ENCODE measurements at regions of chr1 and their contacts with region 1.

Region 1: DNA sequence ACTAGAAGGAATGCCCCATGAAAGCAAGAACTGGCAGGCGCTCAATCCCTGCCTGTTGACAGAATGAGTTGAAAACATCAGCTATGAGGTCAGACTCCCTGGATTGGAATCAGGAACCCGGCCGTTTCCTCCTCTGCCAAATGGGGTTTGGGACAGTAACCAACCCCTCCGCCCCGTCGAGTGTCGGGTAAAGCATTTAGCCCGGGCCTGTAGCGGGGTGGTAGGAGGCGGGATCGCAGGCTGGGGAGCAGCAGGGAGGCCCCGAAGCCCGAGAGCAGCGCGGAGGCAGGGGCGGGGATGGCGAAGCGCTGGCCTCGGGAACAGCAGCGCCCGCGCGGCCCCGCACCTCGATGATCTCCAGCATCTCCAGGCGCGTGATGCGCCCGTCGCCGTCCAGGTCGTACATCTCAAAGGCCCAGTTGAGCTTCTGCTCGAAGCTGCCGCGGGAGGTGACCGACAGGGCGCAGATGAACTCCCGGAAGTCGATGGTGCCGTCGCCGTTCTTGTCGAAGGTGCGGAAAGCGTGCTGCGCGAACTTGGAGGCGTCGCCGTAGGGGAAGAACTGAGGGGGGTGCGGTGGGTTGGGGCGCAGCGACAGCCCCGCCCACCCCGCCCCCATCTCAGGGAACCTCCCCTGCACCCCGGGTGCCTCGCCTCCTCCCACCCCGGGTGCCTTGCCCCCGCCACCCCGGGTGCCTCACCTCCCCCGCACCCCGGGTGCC is 7.5 kb downstream of the HPCAL4 start:
- DNase-seq: peak in 3 of 5 donors; percentile 38 to 61 (median 51)
- H3K4me3 ChIP-seq: no peak overlapping the region
- H3K27ac ChIP-seq: no peak overlapping the region
- H3K4me1 ChIP-seq: peaks cover 3% of the 10 kb centered on the region
- H3K27me3 ChIP-seq: no peaks in the 10 kb centered on the region
- CTCF ChIP-seq: no peak
- EP300 ChIP-seq: no peak
- POLR2A ChIP-seq: no peak

Region 2: DNA sequence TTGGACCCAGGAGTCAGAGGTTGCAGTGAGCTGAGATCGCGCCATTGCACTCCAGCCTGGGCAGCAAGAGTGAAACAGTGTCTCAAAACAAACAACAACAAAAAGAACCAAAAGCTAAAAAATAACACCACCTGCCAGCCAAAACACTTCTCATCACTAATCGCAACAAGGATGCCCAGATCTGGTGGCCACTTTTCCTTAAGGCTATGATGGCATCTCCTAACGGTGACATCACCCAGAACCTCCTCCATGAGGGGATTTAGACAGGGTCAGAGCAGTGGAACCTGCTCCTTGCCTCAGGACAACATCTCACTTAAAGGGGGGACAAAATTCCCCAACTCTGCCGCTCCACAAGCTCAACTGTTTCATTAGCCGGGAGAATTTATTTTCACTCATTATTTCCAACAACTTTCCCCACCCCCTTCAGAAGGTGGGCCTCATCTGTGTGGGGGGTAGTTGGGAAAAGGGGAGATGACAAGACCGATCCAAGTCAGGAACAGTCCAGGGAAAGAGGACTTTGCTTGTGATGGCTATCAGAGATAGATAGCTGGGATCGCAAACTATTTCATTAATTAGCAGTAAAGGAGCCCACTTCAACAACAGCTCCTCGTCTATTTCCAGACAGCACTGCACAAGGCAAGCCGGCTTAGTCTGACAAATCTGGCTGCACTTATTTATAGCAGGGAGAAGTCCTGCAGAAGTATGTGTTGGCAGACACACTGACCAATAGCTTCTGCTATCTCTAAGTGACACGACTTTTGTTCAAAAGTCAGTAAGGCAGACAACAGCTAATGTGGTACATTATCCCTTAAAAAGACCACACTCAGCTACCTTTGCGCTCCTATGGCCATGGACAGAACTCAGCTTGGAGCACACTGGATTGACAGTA is 109.8 kb before region 1 on chr1:
- intact Hi-C with region 1: no loop called
- DNase-seq: no peak
- H3K4me3 ChIP-seq: peak overlapping the region; percentile 92
- H3K27ac ChIP-seq: no peak overlapping the region
- H3K4me1 ChIP-seq: peaks cover 8% of the 10 kb centered on the region
- H3K27me3 ChIP-seq: no peaks in the 10 kb centered on the region
- CTCF ChIP-seq: no peak
- EP300 ChIP-seq: no peak
- POLR2A ChIP-seq: no peak

Region 3: DNA sequence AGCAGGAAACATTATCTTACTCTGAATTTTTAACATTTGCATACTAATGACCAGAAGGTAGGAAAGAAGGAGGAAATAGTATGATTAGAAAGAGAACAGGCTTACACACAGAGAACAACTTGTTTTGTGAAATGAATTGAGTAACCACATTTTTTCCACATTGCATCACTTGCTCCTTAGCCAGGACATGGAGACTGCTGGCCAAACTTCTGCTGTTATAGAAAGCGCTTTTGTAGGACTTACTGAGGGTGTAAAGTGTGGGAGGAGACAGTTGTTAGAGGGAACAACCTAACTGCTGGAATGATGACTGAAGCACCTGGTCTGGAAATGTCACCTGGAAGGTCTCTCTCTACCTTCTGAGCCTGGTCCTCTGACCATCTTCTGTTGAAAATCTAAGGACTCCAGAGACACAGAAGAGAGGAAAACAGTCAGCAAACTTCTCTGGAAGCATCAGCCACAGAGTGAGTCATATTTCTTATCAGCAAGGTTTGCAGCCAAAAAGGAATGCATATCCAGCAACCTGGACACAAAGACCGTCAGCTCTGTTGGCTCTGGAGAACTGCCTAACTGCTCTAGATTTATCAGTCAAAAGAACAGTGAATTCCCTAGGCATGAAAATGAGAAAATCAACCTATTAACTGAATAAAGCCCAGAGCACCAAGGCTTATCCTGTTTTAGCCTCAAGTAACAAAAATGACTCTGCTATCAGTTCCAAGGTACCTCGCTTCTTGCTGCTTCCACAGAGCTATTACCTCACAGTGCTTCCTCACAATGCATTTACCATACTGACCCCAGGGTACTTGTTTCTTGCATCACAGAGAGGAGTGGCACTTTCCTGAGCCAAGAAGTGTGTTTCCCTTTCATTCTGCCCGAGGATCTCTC is 1425.8 kb after region 1 on chr1:
- intact Hi-C with region 1: loop called in 1 of 4 experiments (anchors 10 kb)
- DNase-seq: peak; percentile 45 to 74 (median 54)
- H3K4me3 ChIP-seq: no peak overlapping the region
- H3K27ac ChIP-seq: peak overlapping the region; percentile 89 to 90
- H3K4me1 ChIP-seq: peaks cover 6% of the 10 kb centered on the region
- H3K27me3 ChIP-seq: no peaks in the 10 kb centered on the region
- CTCF ChIP-seq: no peak
- EP300 ChIP-seq: peak; percentile 72
- POLR2A ChIP-seq: no peak